PC-3 (cell line): ENCODE measurements at regions of chr13 and their contacts with region 1.

Region 1: DNA sequence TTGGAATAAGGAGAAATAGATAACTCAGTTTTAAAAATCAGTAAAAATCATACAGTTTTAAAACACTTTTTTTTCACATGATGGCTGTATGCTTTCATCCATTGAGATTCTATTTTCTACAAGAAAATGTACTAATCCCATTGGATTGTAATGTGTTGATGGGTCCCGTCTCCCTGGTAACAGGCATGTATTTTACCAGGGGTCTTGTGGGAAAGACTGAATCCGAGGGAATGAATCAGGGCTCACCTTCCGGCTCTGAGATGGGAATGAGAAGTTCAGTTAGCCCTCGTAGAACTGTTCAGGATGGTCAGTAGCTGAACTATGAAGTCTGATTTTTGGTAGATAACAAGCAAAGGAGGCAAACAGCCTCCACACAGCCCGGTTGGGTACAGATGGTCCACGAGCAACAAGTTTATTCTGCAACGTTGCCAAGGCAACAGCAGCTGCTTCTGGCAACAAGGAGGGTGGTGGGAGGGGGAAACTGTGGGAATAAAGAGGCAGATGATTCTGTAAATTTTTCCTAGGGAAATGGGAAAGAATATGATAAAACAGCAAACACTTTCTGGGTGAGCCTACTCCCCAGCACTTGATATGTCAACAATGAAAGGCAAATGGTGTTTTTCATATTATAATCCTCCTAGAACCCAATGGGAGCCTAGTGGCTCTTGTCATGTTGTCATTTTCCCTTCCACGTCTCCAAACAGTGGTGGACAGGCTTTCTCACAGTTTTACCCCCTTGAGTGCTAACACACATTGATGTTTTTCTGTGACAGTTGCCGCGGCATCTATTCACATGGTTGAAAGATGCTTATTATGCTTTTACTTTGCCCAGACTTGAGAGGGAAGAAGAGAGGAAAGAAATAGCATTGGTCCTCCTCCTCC is 12.4 kb upstream of the SIAH3 start:
- DNase-seq: no peak
- ATAC-seq: no peak
- H3K4me3 ChIP-seq: no peak overlapping the region
- H3K27ac ChIP-seq: no peak overlapping the region
- H3K4me1 ChIP-seq: peaks cover 10% of the 10 kb centered on the region; the same call in 1 of the 2 replicates
- H3K27me3 ChIP-seq: peaks cover 42% of the 10 kb centered on the region
- CTCF ChIP-seq: no peak

Region 2: DNA sequence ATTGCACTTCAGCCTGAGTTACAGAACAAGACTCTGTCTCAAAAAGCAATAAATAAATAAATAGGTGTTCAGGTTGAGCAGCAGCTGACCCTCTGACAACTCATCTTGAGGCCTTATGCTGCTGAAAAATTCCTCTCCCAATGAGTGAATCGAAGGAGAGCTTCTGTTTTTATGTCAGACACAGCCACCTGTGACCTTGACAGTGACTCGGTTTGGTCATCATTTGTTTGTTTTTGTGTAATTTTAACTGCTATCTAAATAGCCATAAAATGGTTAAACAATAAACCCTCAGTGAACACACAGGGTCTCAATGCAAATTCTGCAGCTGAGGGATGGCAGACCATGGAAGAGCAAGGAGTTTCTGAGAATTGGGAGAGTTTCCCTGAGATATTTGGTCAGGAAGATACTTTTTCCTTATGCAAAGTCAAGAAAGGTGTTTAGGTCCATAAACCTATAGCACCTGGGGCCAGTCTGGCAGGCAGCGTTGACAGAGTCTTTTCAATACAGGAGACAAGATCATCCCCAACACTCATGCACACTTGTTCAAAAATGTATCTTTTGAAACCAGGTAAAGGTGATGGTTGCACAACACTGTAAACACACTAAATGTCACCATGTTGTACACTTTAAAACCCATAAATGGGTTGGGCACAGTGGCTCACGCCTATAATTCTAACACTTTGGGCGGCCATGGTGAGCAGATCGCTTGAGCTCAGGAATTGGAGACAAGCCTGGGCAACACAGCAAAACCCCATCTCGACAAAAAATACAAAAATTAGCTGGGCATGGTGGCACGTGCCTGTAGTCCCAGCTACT is 429.2 kb before region 1 on chr13:
- CTCF ChIA-PET with region 1: interaction called, 19 read pairs
- POLR2A ChIA-PET with region 1: no interaction called
- intact Hi-C with region 1: no loop called
- DNase-seq: no peak
- ATAC-seq: no peak
- H3K4me3 ChIP-seq: no peak overlapping the region
- H3K27ac ChIP-seq: no peak overlapping the region
- H3K4me1 ChIP-seq: no peaks in the 10 kb centered on the region
- H3K27me3 ChIP-seq: no peaks in the 10 kb centered on the region
- CTCF ChIP-seq: no peak

Region 3: GRCh38 chr13:45847554-45848224 is 16.3 kb before region 1 on chr13:
- CTCF ChIA-PET with region 1: no interaction called
- POLR2A ChIA-PET with region 1: no interaction called
- intact Hi-C with region 1: no loop called
- DNase-seq: no peak
- ATAC-seq: no peak
- H3K4me3 ChIP-seq: no peak overlapping the region
- H3K27ac ChIP-seq: no peak overlapping the region
- H3K4me1 ChIP-seq: no peaks in the 10 kb centered on the region
- H3K27me3 ChIP-seq: peaks cover 79% of the 10 kb centered on the region
- CTCF ChIP-seq: no peak